ENCODE measurements at regions of chr2 and their contacts with region 1.

Region 1: GRCh38 chr2:118003396-118003824 is 10.5 kb downstream of the CCDC93 start:
- DNase-seq: peak; percentile 30
- H3K4me3 Mint-ChIP-seq: no peak overlapping the region
- H3K27ac Mint-ChIP-seq: peak overlapping the region; percentile 56
- H3K4me1 Mint-ChIP-seq: peaks cover 16% of the 10 kb centered on the region
- H3K27me3 Mint-ChIP-seq: no peaks in the 10 kb centered on the region

Region 2: GRCh38 chr2:117814417-117815264 is 188.8 kb before region 1 on chr2 and contains the start of gene DDX18:
- intact Hi-C with region 1: loop called (anchors 1 kb)
- DNase-seq: peak; percentile 96
- H3K4me3 Mint-ChIP-seq: peak within 1 kb of the TSS; percentile 90
- H3K27ac Mint-ChIP-seq: peak within 1 kb of the TSS; percentile 92
- H3K4me1 Mint-ChIP-seq: peaks cover 21% of the 10 kb centered on the region
- H3K27me3 Mint-ChIP-seq: no peaks in the 10 kb centered on the region
- total RNA-seq, gene DDX18: 128 and 131 TPM in 2 replicates

Region 3: DNA sequence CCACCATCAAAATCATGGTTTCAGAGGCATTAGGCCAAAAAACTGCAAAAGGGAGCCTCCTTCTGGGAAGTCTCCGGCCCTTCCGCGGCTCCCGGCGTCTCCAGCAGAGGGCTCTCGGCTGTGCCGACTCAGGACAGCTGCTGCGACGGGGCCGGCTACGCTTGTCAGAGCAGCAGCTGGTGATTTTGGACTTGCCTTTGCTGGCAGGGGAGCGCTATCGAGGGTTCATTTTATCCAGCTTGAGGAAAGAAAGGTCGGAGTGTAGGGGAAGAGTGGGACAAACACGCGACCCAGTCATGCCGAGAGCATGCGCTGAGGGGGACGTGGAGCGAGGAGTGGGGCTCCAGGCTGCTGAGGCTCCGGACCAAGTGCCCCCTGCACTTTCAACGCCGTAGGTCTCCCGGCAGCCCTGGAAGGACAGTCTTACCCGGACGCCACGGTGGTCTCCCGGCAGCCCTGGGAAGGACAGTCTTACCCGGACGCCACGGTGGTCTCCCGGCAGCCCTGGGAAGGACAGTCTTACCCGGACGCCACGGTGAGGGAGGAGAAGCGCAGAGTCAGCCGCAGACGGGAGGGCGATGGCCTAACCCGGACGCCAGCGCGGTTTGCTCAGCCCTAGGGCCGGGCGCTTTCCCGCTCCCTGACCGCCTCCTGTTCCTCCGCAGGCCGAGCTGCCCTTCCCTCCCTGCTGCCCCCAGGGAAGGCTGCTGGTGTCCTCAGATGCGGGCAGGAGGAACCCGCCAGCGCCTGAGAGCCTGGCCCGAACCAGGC is 167.2 kb before region 1 on chr2:
- intact Hi-C with region 1: loop called (anchors 1 kb)
- DNase-seq: peak; percentile 20
- H3K4me3 Mint-ChIP-seq: peak overlapping the region; percentile 43
- H3K27ac Mint-ChIP-seq: no peak overlapping the region
- H3K4me1 Mint-ChIP-seq: peaks cover 2% of the 10 kb centered on the region
- H3K27me3 Mint-ChIP-seq: no peaks in the 10 kb centered on the region

Region 4: GRCh38 chr2:117958186-117958585 is 45.2 kb before region 1 on chr2:
- intact Hi-C with region 1: loop called (anchors 5 kb)
- DNase-seq: no peak
- H3K4me3 Mint-ChIP-seq: no peak overlapping the region
- H3K27ac Mint-ChIP-seq: no peak overlapping the region
- H3K4me1 Mint-ChIP-seq: no peaks in the 10 kb centered on the region
- H3K27me3 Mint-ChIP-seq: no peaks in the 10 kb centered on the region

Region 5: DNA sequence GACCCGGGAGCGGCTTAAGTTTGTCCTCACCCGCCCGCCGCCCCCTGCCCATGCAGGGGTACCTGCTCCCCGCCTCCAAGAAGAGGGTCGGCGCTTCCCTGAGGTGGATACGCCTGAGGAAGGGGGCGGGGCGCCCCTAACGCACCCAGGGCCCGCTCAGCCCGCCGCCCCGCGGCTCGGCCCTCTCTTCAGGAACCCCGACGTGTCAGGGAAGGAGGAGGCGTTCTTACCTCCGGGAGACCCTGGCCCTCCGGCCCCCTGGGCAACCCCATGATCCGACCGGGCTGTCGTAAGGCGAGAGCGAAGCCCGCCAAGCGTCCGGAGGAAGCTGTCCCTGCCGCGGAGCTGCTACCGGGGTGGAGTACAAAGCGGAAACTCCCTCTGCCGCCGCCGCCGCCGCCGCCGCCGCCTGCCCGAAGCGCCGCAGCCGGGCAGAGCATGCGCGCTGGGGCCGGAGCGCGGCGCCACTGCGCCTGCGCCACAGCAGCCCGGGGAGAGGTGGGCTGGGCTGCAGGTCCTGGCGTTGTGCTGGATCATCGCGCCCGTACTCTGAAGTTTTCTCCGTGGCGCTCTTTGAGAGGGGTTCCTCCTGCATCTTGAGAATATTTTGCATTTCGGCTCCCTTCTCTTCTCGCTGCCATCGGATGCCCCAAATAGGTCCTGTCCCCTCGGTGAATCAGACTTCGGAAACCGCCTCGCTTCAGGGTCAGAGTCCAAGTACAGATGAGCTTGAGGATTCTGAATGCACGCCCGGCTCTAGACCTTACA is 10.5 kb after region 1 on chr2 and contains the start of gene CCDC93:
- intact Hi-C with region 1: loop called (anchors 1 kb)
- DNase-seq: peak; percentile 85
- H3K4me3 Mint-ChIP-seq: peak within 1 kb of the TSS; percentile 92
- H3K27ac Mint-ChIP-seq: peak within 1 kb of the TSS; percentile 85
- H3K4me1 Mint-ChIP-seq: peaks cover 34% of the 10 kb centered on the region
- H3K27me3 Mint-ChIP-seq: peaks cover 5% of the 10 kb centered on the region
- total RNA-seq, gene CCDC93: 33.8 and 37.0 TPM in 2 replicates

Measured in activated T-helper 2 cell treated with anti-CD3 and anti-CD28 coated beads, Interferon-gamma antibody, Interleukin-2, Interleukin-4, amounts not matched to agents 10 μg/mL and 5 μg/mL and 100 μg/mL, durations not matched to agents 14 hours and 24 hours and 36 hours (primary cell).